GM10248 (cell line): ENCODE measurements at regions of chr7 and their contacts with region 1.

Region 1: GRCh38 chr7:131859147-131859821 is 302.9 kb upstream of the PODXL start:
- DNase-seq: peak; percentile 70
- CTCF ChIP-seq: peak; percentile 76

Region 2: GRCh38 chr7:131654668-131655326 is 204.5 kb before region 1 on chr7:
- CTCF ChIA-PET with region 1: no interaction called
- POLR2A ChIA-PET with region 1: no interaction called
- DNase-seq: peak; percentile 91
- CTCF ChIP-seq: peak; percentile 99

Region 3: DNA sequence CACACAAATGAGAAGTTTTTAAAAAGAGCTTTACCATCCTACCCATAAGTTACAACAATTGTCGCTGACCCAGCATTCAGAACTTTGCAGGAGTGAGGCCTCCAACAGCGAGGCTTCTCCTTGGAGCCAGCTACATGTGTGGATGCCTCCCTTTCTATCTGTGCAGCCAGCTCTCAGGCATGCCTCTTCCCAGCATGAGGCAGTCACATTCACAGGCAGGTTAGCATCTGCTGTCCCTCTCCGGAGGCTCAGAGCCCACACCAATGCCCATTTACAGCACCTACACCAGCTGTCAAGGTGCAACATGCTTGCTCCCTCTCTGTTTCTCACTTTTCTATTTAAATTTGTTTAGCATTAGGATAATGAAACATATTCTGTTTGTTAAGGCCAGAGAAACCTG is 24.1 kb before region 1 on chr7:
- CTCF ChIA-PET with region 1: interaction called, 18 read pairs
- POLR2A ChIA-PET with region 1: no interaction called
- DNase-seq: no peak
- CTCF ChIP-seq: no peak

Region 4: DNA sequence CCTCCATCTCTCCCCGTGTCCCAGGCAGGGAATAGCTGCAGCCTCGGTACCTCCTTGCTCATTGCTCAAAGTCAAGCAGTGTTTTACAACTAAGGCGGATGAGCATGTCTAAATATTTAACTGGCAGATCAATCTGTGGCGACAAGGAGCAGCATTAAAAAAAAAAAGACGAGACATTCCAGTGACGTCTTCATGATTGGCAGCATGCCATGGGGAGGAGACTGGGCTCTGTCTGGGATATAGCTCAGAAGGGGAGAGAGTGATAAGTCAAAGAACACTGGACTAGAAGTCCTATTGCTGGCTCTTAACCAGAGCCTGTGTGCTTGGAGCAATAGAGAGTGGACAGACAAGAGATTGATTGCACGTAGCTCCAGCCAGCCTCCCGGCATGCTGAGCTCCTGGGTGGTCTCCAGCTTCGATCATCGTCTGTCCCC is 15.4 kb before region 1 on chr7:
- CTCF ChIA-PET with region 1: interaction called, 16 read pairs
- POLR2A ChIA-PET with region 1: no interaction called
- DNase-seq: no peak
- CTCF ChIP-seq: no peak

Region 5: GRCh38 chr7:131869169-131869844 is 10.0 kb after region 1 on chr7:
- CTCF ChIA-PET with region 1: interaction called, 24 read pairs
- POLR2A ChIA-PET with region 1: no interaction called
- DNase-seq: no peak
- CTCF ChIP-seq: no peak